ENCODE measurements at regions of chr16 and their contacts with region 1.

Region 1: DNA sequence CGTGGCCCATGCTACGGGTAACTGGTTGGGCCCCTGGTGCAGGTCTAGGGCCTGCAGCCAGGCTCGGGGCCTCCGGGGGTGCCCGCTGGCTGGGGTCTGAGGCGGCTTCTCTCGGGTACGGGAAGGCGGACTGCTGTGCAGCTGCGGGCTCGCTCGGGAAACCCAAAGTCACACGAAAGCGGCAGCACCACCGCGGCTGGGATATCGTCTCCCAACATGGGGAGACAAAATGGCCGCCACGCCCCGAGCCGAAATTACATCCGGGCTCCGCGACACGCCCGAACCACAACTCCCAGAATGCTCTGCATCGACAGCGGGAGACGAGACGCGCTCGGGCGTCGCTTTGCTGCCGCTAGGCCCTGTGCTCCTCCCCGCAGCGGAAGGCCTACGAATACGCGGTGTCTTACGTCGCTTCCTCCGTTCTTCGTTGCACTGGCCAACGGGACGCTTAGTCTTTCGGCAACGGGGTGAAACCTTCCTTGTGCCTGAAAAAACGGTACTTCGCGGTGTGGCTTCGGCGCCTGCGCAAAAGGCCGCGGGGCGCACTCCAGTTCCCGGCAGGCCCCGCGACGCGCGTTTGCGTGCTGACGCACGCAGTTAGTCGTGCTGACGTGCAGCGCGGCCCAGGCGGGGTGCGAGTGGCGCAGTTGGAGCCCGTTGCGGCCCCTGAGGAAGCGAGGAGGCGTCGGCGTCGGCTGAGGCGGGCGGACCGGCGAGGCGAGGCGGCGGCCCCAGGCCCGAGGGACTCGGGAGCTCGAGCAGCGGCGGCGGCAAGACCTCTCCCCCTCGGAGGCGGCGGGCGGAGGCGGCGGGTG is at the start of gene SRRM2:
- DNase-seq: peak; percentile 91
- H3K4me3 ChIP-seq: peak within 1 kb of the TSS; percentile 91
- H3K27ac ChIP-seq: peak within 1 kb of the TSS; percentile 99
- H3K27me3 ChIP-seq: no peaks in the 10 kb centered on the region
- CTCF ChIP-seq: no peak
- polyA plus RNA-seq, gene SRRM2: 80.5 and 116 TPM in 2 replicates

Region 2: DNA sequence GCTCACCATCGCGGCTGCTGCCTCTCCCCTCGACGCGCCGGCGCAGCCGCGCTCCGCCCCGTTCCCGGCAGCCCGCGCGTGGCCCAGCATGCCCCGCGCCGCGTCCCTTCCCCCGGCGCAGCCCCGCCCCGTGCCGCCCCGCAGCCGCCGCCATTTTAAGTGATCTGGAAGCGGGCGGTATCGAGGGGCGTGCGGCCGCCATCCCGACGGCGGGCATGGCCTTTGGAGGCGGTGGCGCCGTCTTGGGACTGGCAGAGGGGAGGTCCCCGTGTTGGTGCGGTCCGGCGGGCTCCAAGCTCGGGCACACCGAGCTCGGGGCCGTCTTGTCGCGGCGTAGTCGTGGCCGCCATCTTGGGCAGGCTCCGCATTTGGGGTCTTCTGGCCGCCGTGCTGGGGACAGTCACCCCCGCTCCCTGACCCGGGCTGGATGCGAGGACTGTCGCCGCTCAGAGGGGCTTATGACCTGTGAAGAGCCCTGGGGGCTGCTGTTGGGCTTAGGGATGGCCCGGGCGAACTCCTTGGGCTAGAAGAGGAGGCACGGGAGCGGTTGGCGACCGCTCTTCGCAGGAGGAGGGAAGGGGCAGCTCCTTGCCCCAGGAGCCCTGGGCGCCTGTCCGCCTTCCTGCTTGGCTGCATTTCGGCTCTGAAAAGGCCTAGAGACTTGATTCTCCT is 25.1 kb after region 1 on chr16 and contains the start of gene ELOB:
- CTCF ChIA-PET with region 1: no interaction called
- POLR2A ChIA-PET with region 1: interaction called, 17 read pairs
- DNase-seq: peak; percentile 18
- H3K4me3 ChIP-seq: peak within 1 kb of the TSS; percentile 96
- H3K27ac ChIP-seq: peak within 1 kb of the TSS; percentile 92
- H3K27me3 ChIP-seq: no peaks in the 10 kb centered on the region
- CTCF ChIP-seq: no peak
- polyA plus RNA-seq, gene ELOB: 146 and 230 TPM in 2 replicates